Activated CD4-positive, alpha-beta memory T cell treated with anti-CD3 and anti-CD28 coated beads for 36 hours (primary cell): ENCODE measurements at regions of chr22 and their contacts with region 1.

Region 1: GRCh38 chr22:37121887-37122591 is 12.5 kb upstream of the TMPRSS6 start:
- DNase-seq: peak; percentile 97
- H3K4me3 Mint-ChIP-seq: peak overlapping the region; percentile 88
- H3K27ac Mint-ChIP-seq: peak overlapping the region; percentile 100
- H3K4me1 Mint-ChIP-seq: peaks cover 81% of the 10 kb centered on the region
- H3K27me3 Mint-ChIP-seq: no peaks in the 10 kb centered on the region

Region 2: DNA sequence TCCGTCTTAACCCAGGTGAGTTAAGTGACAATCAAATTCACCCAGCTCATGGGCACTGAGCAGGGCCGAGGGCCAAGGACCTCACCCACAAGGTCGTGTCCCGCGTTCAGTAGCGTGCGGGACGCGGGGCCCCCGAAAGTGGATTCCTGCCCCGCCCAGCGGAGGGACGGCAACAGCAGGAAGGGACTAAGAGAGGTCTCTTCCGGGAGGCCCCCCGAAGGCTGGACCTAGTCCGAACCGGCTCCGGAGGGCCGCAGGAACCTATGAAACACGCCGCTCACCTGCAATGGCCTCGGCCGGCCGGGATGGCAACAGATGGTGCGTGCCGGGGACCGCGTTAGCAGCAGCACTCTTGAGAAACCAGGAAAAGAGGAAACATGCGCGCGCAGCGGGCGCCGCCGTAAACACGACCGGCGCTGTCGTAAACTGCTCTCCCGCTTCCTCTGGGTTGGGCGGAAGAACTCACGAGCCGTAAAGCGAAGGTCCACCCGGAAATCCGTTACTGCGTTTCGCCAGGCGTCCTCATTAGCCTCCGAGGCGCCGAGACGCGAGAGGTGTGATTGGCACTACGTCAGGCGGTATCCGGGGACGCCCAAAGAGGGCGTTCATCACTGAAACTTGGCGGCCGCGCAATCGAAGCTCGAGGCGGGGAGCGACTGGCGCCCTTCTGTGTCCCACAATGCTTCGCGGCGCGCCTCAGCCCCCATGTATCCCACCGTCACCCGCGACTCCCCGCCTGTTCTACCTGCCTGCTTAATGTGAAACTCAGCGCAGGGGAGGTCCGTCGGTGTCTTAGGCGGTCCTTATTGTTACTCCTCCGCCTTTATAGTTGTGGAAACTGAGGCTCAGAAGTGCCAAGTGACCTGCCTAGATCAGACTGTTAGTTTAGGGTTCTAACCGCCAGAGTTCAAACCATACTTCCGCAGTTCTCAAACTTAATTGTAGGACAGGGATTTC is 593.0 kb before region 1 on chr22 and contains the start of gene EIF3D:
- CTCF ChIA-PET with region 1: no interaction called
- POLR2A ChIA-PET with region 1: interaction called, 3 read pairs
- intact Hi-C with region 1: loop called (anchors 10 kb)
- DNase-seq: peak; percentile 99
- H3K4me3 Mint-ChIP-seq: peak within 1 kb of the TSS; percentile 95
- H3K27ac Mint-ChIP-seq: peak within 1 kb of the TSS; percentile 98
- H3K4me1 Mint-ChIP-seq: peaks cover 20% of the 10 kb centered on the region
- H3K27me3 Mint-ChIP-seq: peaks cover 1% of the 10 kb centered on the region
- total RNA-seq, gene EIF3D: 314 to 321 TPM

Region 3: DNA sequence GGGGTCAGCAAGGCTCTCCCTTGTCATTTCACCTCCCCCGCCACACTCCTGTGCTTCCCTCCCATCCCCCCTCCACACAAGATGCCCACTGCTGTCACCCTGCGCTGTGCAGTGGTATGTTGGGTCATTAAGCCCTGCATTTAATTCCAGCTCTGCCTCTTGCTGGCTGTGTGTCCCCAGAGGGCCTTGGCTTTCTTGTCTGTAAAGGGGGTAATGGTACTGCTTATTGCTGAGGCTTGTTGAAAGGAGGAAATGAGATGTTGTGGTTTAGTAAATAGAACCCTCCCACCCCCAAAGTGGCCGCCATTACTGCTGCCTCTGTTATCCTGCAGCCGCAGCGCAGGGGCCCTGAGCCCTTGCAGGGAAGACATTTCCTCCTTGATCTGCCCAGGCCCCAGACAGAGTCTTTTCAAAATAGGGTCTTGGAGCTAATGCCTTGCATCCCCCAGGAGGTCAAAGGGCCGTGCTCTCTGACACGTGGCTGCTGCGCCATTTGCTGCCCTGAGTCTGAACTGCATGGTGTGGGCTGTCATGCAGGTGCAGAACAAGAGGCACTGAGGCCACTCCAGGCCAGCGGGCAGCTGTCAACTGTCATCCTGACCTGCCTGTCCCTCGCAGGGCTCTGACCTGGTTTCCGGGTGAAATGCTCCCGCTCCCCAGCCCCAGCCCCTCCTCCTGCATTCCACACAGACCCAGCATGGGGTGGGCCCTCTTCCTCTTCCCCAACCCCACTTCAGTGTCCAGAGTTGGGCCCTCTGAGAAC is 323.9 kb before region 1 on chr22:
- CTCF ChIA-PET with region 1: no interaction called
- POLR2A ChIA-PET with region 1: no interaction called
- intact Hi-C with region 1: no loop called
- DNase-seq: no peak
- H3K4me3 Mint-ChIP-seq: no peak overlapping the region
- H3K27ac Mint-ChIP-seq: no peak overlapping the region
- H3K4me1 Mint-ChIP-seq: no peaks in the 10 kb centered on the region
- H3K27me3 Mint-ChIP-seq: peaks cover 10% of the 10 kb centered on the region

Region 4: GRCh38 chr22:37051391-37052385 is 70.4 kb before region 1 on chr22 and contains the start of gene KCTD17:
- CTCF ChIA-PET with region 1: interaction called, 16 read pairs
- POLR2A ChIA-PET with region 1: interaction called, 10 read pairs
- intact Hi-C with region 1: no loop called
- DNase-seq: peak; percentile 86
- H3K4me3 Mint-ChIP-seq: peak within 1 kb of the TSS; percentile 72
- H3K27ac Mint-ChIP-seq: peak within 1 kb of the TSS; percentile 33
- H3K4me1 Mint-ChIP-seq: peaks cover 19% of the 10 kb centered on the region
- H3K27me3 Mint-ChIP-seq: no peaks in the 10 kb centered on the region
- total RNA-seq, gene KCTD17: 46.0 to 47.3 TPM

Region 5: GRCh38 chr22:37088108-37088605 is 33.9 kb before region 1 on chr22:
- CTCF ChIA-PET with region 1: interaction called, 6 read pairs
- POLR2A ChIA-PET with region 1: interaction called, 36 read pairs
- intact Hi-C with region 1: no loop called
- DNase-seq: peak; percentile 85
- H3K4me3 Mint-ChIP-seq: peak overlapping the region; percentile 74
- H3K27ac Mint-ChIP-seq: peak overlapping the region; percentile 83
- H3K4me1 Mint-ChIP-seq: peaks cover 37% of the 10 kb centered on the region
- H3K27me3 Mint-ChIP-seq: peaks cover 2% of the 10 kb centered on the region

Region 6: DNA sequence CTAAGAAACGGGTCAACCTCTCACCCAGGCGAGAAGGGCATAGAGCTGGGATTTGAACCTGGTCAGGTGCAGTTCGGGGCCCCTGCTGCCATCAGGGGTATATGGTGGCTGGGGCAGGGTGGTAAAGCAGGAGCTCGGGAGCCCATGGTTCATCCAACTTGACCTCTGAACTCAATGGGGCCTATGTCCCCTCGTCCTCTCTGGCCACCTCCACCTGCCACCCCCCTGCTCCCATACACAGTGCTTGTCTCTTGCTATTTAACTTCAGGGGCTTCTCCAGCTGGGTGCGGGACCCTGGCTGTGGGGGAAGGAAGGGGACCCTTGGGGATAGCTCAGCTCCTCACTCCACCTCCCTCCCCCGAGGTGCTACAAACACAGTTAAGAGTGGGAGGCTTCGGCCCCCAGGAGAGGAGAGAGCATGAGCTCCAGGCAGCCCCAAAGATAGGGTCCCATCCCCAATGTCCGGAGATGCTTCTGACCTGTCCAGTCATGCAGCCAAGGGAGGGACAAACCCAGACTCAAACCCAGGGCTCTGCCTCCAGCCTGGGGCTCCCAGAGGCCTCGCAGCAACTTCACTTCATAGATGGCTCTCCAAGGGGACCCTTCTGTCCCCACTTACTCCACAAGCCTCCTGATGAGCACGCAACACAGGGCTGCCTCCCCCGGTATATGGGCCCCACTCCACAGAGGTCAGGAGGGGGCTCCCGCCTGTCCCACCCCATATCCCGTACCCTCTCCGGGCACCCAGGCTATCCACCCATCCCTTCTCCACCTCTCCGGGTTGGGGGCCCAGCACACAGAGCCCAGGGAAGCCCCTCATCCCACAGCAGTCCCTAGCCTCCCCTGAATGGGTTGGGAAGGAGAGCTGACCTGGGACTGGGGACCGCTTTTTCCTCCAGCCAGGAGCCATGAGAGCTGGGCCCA is 27.0 kb after region 1 on chr22:
- CTCF ChIA-PET with region 1: interaction called, 18 read pairs
- POLR2A ChIA-PET with region 1: interaction called, 138 read pairs
- intact Hi-C with region 1: loop called (anchors 1 kb)
- DNase-seq: no peak
- H3K4me3 Mint-ChIP-seq: peak overlapping the region; percentile 95
- H3K27ac Mint-ChIP-seq: peak overlapping the region; percentile 95
- H3K4me1 Mint-ChIP-seq: peaks cover 56% of the 10 kb centered on the region
- H3K27me3 Mint-ChIP-seq: no peaks in the 10 kb centered on the region

Region 7: DNA sequence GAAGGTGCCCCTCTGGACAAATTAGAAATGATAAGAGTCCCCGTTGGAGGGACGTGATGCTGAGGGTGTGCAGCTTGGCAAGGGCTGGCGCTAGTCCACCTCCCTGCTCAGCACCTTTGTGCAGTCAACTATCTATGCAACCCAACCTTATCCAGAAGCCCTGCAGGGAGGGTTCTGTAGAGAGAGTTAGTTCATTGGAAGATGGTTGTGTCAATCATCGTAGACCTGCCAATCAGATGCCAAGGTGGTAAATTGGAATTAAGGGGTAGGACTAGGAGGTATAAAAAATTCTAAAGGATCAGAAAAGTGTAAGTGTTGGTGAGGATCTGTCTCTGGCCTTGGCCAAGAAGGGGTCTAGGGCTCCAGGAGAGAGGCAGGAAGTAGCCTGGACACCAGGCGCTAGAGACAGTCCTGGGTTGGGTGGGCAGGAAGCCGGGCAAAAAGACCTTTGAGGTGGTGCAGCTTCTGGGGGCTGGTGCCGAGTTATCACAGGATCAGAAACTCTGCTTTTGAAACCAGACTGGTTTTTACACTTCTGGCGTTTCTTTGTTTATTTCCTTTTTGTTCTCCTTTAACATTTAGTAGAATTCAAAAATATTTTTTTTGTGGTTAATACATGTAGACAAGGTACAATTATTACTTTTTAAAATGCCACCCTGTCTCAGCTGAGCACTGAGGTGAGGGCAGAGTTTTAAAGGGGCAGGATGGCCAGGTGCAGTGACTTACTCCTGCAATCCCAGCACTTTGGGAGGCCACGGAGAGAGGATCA is 64.4 kb after region 1 on chr22:
- CTCF ChIA-PET with region 1: no interaction called
- POLR2A ChIA-PET with region 1: no interaction called
- intact Hi-C with region 1: no loop called
- DNase-seq: peak; percentile 44
- H3K4me3 Mint-ChIP-seq: peak overlapping the region; percentile 35
- H3K27ac Mint-ChIP-seq: peak overlapping the region; percentile 69
- H3K4me1 Mint-ChIP-seq: peaks cover 39% of the 10 kb centered on the region
- H3K27me3 Mint-ChIP-seq: no peaks in the 10 kb centered on the region

Region 8: GRCh38 chr22:37212167-37212906 is 90.3 kb after region 1 on chr22 and contains the start of gene SSTR3:
- CTCF ChIA-PET with region 1: no interaction called
- POLR2A ChIA-PET with region 1: no interaction called
- intact Hi-C with region 1: no loop called
- DNase-seq: no peak
- H3K4me3 Mint-ChIP-seq: no peak within 1 kb of the TSS
- H3K27ac Mint-ChIP-seq: no peak within 1 kb of the TSS
- H3K4me1 Mint-ChIP-seq: peaks cover 28% of the 10 kb centered on the region
- H3K27me3 Mint-ChIP-seq: no peaks in the 10 kb centered on the region
- total RNA-seq, gene SSTR3: 8.5 to 9.3 TPM

Region 9: GRCh38 chr22:37229805-37230672 is 108.0 kb after region 1 on chr22:
- CTCF ChIA-PET with region 1: interaction called, 3 read pairs
- POLR2A ChIA-PET with region 1: interaction called, 13 read pairs
- intact Hi-C with region 1: no loop called
- DNase-seq: peak; percentile 97
- H3K4me3 Mint-ChIP-seq: peak overlapping the region; percentile 67
- H3K27ac Mint-ChIP-seq: peak overlapping the region; percentile 98
- H3K4me1 Mint-ChIP-seq: peaks cover 90% of the 10 kb centered on the region
- H3K27me3 Mint-ChIP-seq: no peaks in the 10 kb centered on the region